ENCODE measurements at regions of chr11 and their contacts with region 1.

Region 1: DNA sequence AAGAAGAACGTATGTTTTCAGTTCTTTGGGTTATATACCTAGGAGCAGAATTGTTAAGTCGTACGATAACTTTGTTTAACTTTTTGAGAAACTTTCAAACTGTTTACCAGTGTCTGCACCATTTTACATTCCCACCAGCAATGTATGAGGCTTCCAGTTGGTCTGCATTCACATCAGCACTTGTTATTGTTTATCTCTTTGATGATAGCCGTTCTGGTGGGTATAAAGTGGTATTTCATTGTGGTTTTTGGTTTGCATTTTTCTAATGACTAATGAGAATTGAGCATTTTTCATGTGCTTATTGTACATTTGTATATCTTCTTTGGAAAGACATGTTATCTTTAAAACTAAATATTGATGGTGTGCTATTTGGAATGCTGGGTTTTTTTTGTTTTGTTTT is 59.8 kb downstream of the KDM2A start:
- DNase-seq: no peak
- ATAC-seq: no peak
- H3K4me3 ChIP-seq: no peak overlapping the region
- H3K27ac ChIP-seq: no peak overlapping the region
- H3K4me1 ChIP-seq: no peaks in the 10 kb centered on the region
- H3K27me3 ChIP-seq: no peaks in the 10 kb centered on the region
- CTCF ChIP-seq: no peak

Region 2: GRCh38 chr11:67213178-67213621 is 34.3 kb after region 1 on chr11:
- intact Hi-C with region 1: loop called in 1 of 2 experiments (anchors 5 kb)
- DNase-seq: no peak
- ATAC-seq: no peak
- H3K4me3 ChIP-seq: no peak overlapping the region
- H3K27ac ChIP-seq: no peak overlapping the region
- H3K4me1 ChIP-seq: no peaks in the 10 kb centered on the region
- H3K27me3 ChIP-seq: no peaks in the 10 kb centered on the region
- CTCF ChIP-seq: no peak

Measured in psoas muscle (tissue), 8 donors.